ENCODE measurements at regions of chr2 and their contacts with region 1.

Region 1: DNA sequence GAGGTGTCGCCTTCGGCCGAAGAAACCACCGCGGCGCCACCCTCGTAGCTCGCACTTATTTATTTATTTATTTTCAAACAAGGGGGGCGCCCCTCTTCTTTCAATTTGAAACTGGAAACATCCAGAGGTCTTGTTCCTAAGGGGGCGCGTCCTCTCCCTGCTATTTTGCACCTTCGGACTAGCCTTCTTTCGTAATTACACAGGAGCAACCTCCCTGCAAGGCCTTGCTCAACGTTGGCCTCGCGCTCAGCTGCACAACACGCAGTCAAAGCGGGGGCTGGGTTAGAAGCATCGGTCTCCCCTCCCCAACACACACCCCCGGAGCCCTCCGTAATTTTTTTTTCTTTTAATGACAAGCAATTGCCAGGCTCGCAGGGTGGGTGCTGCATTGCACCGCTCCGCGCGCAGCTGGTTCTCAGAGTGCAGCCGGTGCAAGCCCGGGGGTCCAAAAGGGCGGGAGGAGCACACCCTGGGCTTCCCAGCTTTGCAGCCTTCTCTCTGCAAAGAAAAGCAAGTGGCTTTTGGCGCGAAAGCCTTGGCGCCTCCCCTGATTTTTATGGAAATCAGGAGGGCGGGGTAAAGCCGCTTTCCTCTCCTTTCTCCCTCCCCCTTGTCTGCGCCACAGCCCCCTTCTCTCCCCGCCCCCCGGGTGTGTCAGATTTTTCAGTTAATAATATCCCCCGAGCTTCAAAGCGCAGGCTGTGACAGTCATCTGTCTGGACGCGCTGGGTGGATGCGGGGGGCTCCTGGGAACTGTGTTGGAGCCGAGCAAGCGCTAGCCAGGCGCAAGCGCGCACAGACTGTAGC is at the start of gene MYCN:
- DNase-seq: peak in 8 of 9 donors; percentile 16 to 50 (median 38)
- ATAC-seq: peak; percentile 12
- H3K4me3 ChIP-seq: peak within 1 kb of the TSS; percentile 52
- H3K4me3 Mint-ChIP-seq: peak within 1 kb of the TSS; percentile 50 to 86 (median 80)
- H3K27ac ChIP-seq: no peak within 1 kb of the TSS
- H3K27ac Mint-ChIP-seq: peak within 1 kb of the TSS in 3 of 9 donors; percentile 23 to 38 (median 36)
- H3K4me1 ChIP-seq: peaks cover 0 to 25% of the 10 kb centered on the region in 2 donors
- H3K4me1 Mint-ChIP-seq: peaks cover 7 to 44% (median 30%) of the 10 kb centered on the region in 7 donors
- H3K27me3 ChIP-seq: peaks cover 0 to 6% of the 10 kb centered on the region in 2 donors
- H3K27me3 Mint-ChIP-seq: peaks cover 41 to 78% (median 58%) of the 10 kb centered on the region in 5 donors
- total RNA-seq, gene MYCN: 0.21 to 2.3 (median 0.47) TPM in 4 of 5 experiments, not detected in the other

Region 2: DNA sequence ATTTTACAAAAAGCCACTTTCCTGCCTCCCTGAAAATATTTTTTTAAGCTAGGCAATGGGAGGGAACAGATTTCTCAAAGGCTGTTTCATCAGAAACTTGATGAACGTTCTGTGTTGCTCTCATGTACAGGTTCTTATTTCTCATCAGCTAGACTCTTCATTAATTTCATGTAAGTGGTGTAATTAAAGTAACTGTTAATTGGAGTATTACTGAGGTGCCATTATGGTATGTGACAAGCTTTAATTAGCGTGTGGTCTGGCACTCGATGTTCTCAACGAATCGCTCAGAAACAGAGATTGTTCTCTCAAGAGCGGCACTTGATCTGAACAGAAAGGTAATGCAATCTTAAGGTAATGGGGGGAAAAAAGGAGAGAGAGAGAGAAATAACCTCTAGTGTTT is 81.6 kb before region 1 on chr2:
- CTCF ChIA-PET with region 1: no interaction called
- POLR2A ChIA-PET with region 1: no interaction called
- intact Hi-C with region 1: no loop called
- DNase-seq: no peak
- ATAC-seq: no peak
- H3K4me3 ChIP-seq: no peak overlapping the region
- H3K4me3 Mint-ChIP-seq: no peak overlapping the region
- H3K27ac ChIP-seq: no peak overlapping the region
- H3K27ac Mint-ChIP-seq: no peak overlapping the region
- H3K4me1 ChIP-seq: no peaks in the 10 kb centered on the region
- H3K4me1 Mint-ChIP-seq: peaks cover 0 to 4% (median 0%) of the 10 kb centered on the region in 7 donors
- H3K27me3 ChIP-seq: no peaks in the 10 kb centered on the region
- H3K27me3 Mint-ChIP-seq: peaks cover 0 to 37% (median 17%) of the 10 kb centered on the region in 5 donors

Region 3: GRCh38 chr2:15908371-15908770 is 31.7 kb before region 1 on chr2:
- CTCF ChIA-PET with region 1: no interaction called
- POLR2A ChIA-PET with region 1: no interaction called
- intact Hi-C with region 1: no loop called
- DNase-seq: no peak
- ATAC-seq: no peak
- H3K4me3 ChIP-seq: no peak overlapping the region
- H3K4me3 Mint-ChIP-seq: no peak overlapping the region
- H3K27ac ChIP-seq: no peak overlapping the region
- H3K27ac Mint-ChIP-seq: no peak overlapping the region
- H3K4me1 ChIP-seq: no peaks in the 10 kb centered on the region
- H3K4me1 Mint-ChIP-seq: no peaks in the 10 kb centered on the region
- H3K27me3 ChIP-seq: no peaks in the 10 kb centered on the region
- H3K27me3 Mint-ChIP-seq: peaks cover 0 to 4% (median 3%) of the 10 kb centered on the region in 5 donors

Region 4: DNA sequence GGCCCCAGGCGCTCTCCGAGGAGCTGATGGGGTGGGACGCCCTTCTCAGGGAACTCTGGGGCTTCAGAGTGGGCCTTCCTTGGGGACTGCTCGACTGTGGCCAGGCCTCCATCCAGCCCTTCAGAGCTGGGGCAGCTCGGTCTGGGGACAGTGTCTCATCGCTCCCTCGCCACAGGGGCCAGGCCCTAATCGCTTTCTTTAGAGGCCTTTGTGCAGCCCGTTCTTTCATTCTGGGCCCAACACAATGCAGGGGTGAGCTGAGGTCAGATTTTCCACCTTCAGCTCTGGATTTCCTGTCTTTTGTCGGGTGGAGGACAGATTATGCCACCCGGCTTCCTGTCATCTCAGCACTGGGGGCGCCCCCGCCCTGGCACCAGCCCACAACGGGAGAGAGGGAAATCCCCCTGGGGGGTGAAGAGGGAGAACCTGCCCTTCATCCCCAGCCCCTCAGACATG is 25.5 kb after region 1 on chr2:
- CTCF ChIA-PET with region 1: interaction called, 10 read pairs
- POLR2A ChIA-PET with region 1: interaction called, 15 read pairs
- intact Hi-C with region 1: loop called in 1 of 2 experiments (anchors 1 kb)
- DNase-seq: peak in 8 of 9 donors; percentile 23 to 49 (median 40)
- ATAC-seq: peak; percentile 74
- H3K4me3 ChIP-seq: peak overlapping the region; percentile 29
- H3K4me3 Mint-ChIP-seq: peak overlapping the region; percentile 14 to 88 (median 76)
- H3K27ac ChIP-seq: peak overlapping the region; percentile 45
- H3K27ac Mint-ChIP-seq: peak overlapping the region; percentile 49 to 95 (median 88)
- H3K4me1 ChIP-seq: peaks cover 10 to 23% of the 10 kb centered on the region in 2 donors
- H3K4me1 Mint-ChIP-seq: peaks cover 17 to 63% (median 48%) of the 10 kb centered on the region in 7 donors
- H3K27me3 ChIP-seq: no peaks in the 10 kb centered on the region
- H3K27me3 Mint-ChIP-seq: peaks cover 0 to 8% (median 0%) of the 10 kb centered on the region in 5 donors

Region 5: GRCh38 chr2:16096962-16097361 is 156.9 kb after region 1 on chr2:
- CTCF ChIA-PET with region 1: interaction called, 3 read pairs
- POLR2A ChIA-PET with region 1: no interaction called
- intact Hi-C with region 1: loop called in 1 of 2 experiments (anchors 1 kb)
- DNase-seq: no peak
- ATAC-seq: no peak
- H3K4me3 ChIP-seq: no peak overlapping the region
- H3K4me3 Mint-ChIP-seq: no peak overlapping the region
- H3K27ac ChIP-seq: no peak overlapping the region
- H3K27ac Mint-ChIP-seq: no peak overlapping the region
- H3K4me1 ChIP-seq: no peaks in the 10 kb centered on the region
- H3K4me1 Mint-ChIP-seq: no peaks in the 10 kb centered on the region
- H3K27me3 ChIP-seq: no peaks in the 10 kb centered on the region
- H3K27me3 Mint-ChIP-seq: peaks cover 0 to 4% (median 0%) of the 10 kb centered on the region in 5 donors

Region 6: DNA sequence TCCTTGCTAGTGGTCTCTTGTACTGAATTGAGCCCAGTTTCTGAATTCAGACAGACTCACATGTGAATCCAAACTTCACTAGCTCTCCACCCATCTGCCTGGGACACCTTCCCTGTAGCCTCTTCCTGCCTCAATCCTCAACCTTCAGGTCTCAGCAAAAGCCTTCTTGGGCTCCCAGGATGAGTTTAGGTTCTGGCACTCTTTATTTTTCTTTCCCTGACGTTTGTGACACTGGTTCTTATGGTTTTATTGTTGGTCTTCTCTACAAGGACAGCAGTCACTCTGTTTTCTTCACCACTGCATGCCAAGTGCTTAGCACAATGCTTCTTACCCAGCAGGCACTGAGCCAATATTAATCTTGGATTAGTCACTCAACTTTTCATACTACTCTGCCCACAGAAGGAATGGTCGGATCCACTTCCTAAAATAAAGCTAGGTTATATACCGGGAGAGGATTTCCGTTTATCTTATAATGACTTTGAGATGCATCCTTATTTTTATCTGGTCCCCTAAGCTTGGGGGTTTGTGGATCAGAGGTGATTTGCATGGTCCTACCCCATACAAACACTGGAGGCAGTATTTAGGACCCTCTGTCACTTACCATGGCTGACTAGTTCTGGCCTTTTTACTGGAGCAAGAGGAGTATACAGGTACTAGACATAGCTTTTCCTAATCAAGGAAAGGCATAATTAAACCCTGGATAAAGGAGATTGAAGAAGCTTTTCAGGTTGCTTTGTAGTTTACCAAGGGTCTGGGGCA is 186.6 kb after region 1 on chr2:
- CTCF ChIA-PET with region 1: no interaction called
- POLR2A ChIA-PET with region 1: no interaction called
- intact Hi-C with region 1: no loop called
- DNase-seq: no peak
- ATAC-seq: no peak
- H3K4me3 ChIP-seq: no peak overlapping the region
- H3K4me3 Mint-ChIP-seq: no peak overlapping the region
- H3K27ac ChIP-seq: no peak overlapping the region
- H3K27ac Mint-ChIP-seq: peak overlapping the region in 1 of 9 donors; percentile 43
- H3K4me1 ChIP-seq: no peaks in the 10 kb centered on the region
- H3K4me1 Mint-ChIP-seq: no peaks in the 10 kb centered on the region
- H3K27me3 ChIP-seq: no peaks in the 10 kb centered on the region
- H3K27me3 Mint-ChIP-seq: peaks cover 0 to 16% (median 0%) of the 10 kb centered on the region in 5 donors

Region 7: DNA sequence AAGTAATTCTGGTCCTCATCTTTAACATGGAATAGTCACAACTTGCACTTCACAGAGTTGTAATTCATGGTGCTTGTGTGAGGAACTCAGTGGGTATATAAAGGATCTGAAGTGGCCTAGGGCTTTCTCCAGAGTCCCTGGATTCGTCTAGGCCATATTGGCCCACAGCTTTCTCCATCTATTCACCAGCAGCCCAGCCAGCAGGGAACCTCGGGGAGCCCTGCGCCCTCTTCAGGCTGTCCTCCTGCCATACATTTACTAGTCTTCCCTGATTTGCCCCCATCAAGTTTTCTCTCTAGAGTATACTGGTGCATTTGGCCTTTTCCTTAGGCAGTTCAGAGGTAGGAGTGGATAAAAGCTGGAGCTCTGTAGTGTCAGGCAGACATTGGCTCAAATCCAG is 278.6 kb after region 1 on chr2:
- CTCF ChIA-PET with region 1: no interaction called
- POLR2A ChIA-PET with region 1: no interaction called
- intact Hi-C with region 1: loop called in 1 of 2 experiments (anchors 1 kb)
- DNase-seq: no peak
- ATAC-seq: no peak
- H3K4me3 ChIP-seq: no peak overlapping the region
- H3K4me3 Mint-ChIP-seq: no peak overlapping the region
- H3K27ac ChIP-seq: no peak overlapping the region
- H3K27ac Mint-ChIP-seq: no peak overlapping the region
- H3K4me1 ChIP-seq: no peaks in the 10 kb centered on the region
- H3K4me1 Mint-ChIP-seq: no peaks in the 10 kb centered on the region
- H3K27me3 ChIP-seq: no peaks in the 10 kb centered on the region
- H3K27me3 Mint-ChIP-seq: peaks cover 0 to 15% (median 7%) of the 10 kb centered on the region in 5 donors

Region 8: DNA sequence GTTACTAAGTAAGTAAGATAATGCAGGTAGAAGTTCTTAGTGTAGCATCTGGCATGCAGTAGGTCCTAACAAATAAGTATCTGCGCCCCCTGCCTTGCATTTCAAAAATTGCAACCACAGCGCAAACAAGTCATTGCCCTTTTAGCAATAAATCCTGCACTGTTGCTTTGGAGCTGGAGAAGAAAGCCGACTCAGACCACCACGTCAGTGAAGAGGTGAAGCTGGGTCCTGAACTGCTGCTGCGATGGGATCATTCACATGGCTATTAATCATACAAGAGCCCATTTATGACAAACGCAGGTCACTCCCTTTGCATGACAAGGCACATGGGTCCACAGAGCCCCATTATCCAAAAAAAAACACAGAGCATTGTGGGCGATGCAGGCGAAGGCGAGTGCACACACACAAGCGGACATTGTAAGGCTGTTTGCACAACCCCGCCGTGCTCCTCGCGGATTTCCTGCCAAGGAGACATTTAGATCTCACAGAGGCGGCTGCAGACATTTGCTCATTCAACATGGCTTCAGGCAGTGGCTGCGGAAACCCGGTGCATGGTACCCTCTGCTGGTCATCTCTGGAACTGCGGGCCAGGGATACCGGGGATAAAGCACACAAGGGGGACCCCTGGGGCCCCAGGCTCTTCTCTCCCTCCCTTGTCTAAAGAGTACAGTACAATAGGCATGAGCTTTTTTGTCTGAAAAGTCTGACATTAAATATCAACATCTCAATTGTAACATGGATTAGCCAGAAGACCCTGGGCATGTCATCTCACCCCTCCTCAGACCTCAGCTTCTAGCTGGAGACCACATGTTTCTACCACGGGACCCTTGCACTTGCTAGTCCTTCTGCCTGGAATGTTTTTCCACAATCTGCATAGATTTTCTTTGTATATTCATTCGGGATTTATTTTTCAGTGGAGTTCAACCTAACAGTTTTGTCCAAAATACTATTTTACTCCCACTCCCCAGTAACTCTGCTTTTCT is 668.9 kb after region 1 on chr2:
- CTCF ChIA-PET with region 1: interaction called, 12 read pairs
- POLR2A ChIA-PET with region 1: interaction called, 3 read pairs
- intact Hi-C with region 1: loop called in 1 of 2 experiments (anchors 1 kb)
- DNase-seq: peak; percentile 72 to 91 (median 84)
- ATAC-seq: peak; percentile 94
- H3K4me3 ChIP-seq: peak overlapping the region; percentile 78
- H3K4me3 Mint-ChIP-seq: peak overlapping the region; percentile 79 to 97 (median 90)
- H3K27ac ChIP-seq: peak overlapping the region; percentile 36
- H3K27ac Mint-ChIP-seq: peak overlapping the region; percentile 41 to 90 (median 78)
- H3K4me1 ChIP-seq: no peaks in the 10 kb centered on the region
- H3K4me1 Mint-ChIP-seq: peaks cover 0 to 4% (median 0%) of the 10 kb centered on the region in 7 donors
- H3K27me3 ChIP-seq: no peaks in the 10 kb centered on the region
- H3K27me3 Mint-ChIP-seq: peaks cover under 1 to 6% (median under 1%) of the 10 kb centered on the region in 5 donors

Measured in naive thymus-derived CD4-positive, alpha-beta T cell (primary cell).